Endothelial cell of umbilical vein (primary cell): ENCODE measurements at regions of chr2 and their contacts with region 1.

Region 1: DNA sequence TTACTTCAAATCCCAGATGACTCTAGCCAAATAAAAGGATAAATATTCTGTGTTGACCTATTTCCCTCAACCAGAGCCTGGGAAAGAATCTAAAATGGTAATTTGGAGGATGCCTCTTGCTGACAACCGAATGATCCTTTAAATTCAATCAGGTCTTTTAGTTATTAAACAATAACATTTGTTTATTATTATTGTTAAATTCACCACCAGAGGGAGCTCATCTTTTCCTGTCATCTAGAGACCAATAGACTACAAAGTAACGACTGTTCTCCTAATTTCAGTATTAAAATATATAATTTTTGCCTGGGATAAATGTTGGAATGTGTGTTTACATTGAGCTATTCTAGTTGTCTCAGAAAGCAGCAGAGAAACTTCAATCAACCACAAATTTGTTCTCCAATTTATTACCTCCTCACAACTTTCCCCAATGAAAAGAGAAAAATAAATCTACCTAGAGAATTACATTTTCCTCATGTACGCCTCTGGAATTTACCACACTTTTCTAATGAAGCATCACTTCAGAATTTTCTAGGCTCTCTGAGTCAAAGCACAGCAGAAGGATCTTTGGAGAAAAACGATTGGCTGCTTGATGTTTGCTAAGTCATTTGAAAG is 142.7 kb downstream of the SCG2 start:
- DNase-seq: peak; percentile 26
- H3K4me3 ChIP-seq: no peak overlapping the region
- H3K27ac ChIP-seq: no peak overlapping the region
- H3K4me1 ChIP-seq: peaks cover 6% of the 10 kb centered on the region
- H3K27me3 ChIP-seq: no peaks in the 10 kb centered on the region
- CTCF ChIP-seq: peak; percentile 12 to 17
- POLR2A ChIP-seq: no peak

Region 2: DNA sequence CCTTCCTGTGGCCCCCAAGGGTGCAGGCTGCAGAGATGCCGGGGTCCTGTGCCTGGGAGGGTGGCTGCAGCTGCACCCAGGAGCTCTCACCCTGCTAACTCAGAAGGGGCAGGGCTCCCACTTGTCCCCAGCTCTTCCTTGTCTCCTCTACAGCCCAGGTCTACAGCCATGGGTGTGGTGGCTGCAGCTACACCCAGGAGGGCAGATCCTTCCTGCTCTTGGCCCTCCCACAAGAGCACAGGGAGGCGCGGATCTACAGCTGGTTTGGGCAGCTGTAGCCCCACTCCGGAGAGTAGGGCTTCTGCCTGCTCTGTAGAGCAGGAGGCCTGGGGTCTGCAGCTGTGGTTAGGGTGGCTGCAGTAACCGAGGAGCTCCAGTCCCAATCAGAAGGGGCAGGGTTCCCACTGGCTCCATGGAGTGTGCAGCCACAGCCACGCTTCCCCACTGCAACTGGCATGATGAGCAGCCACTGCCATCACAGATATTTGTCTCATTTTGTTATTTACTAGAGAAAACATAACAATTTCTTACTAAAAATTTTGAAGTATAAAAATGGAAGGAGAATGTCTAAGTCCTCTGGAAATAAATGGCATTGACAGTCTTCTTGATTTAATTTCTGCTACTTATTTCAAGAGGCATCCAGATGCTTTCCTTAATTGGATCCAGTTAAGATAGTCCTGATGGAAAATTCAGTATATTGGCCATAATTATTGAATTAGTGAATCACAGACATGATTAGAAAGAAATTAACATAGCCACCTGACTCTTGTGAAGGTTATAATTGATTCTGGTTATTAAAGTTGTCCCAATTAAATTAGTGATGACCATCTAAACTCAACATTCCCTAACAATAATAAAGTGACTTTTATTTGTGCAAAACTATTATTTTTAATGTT is 173.8 kb before region 1 on chr2:
- CTCF ChIA-PET with region 1: no interaction called
- POLR2A ChIA-PET with region 1: no interaction called
- dilution Hi-C with region 1: no loop called
- intact Hi-C with region 1: no loop called
- DNase-seq: no peak
- H3K4me3 ChIP-seq: no peak overlapping the region
- H3K27ac ChIP-seq: no peak overlapping the region
- H3K4me1 ChIP-seq: no peaks in the 10 kb centered on the region
- H3K27me3 ChIP-seq: no peaks in the 10 kb centered on the region
- CTCF ChIP-seq: no peak
- POLR2A ChIP-seq: no peak

Region 3: DNA sequence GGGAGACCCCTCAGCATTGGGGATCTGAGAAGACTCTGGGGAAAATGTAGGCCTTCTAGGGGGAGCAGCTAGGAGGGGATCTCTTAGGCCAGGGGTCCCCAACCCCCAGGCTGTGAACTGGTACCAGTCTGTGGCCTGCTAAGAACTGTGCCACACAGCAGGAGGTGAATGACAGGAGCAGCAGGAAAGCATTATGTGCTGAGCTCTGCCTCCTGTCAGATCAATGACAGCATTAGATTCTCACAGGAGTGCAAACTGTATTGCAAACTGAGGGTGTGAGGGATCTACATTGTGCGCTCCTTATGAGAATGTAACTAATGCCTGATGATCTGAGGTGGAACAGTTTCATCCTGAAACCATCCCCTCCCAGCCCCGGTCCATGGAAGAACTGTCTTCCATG is 15.5 kb after region 1 on chr2:
- CTCF ChIA-PET with region 1: interaction called, 13 read pairs
- POLR2A ChIA-PET with region 1: no interaction called
- dilution Hi-C with region 1: no loop called
- intact Hi-C with region 1: no loop called
- DNase-seq: no peak
- H3K4me3 ChIP-seq: no peak overlapping the region
- H3K27ac ChIP-seq: no peak overlapping the region
- H3K4me1 ChIP-seq: no peaks in the 10 kb centered on the region
- H3K27me3 ChIP-seq: no peaks in the 10 kb centered on the region
- CTCF ChIP-seq: no peak
- POLR2A ChIP-seq: no peak

Region 4: GRCh38 chr2:223549215-223549614 is 89.8 kb after region 1 on chr2:
- CTCF ChIA-PET with region 1: interaction called, 5 read pairs
- POLR2A ChIA-PET with region 1: no interaction called
- dilution Hi-C with region 1: no loop called
- intact Hi-C with region 1: loop called (anchors 2 kb)
- DNase-seq: peak; percentile 88
- H3K4me3 ChIP-seq: no peak overlapping the region
- H3K27ac ChIP-seq: no peak overlapping the region
- H3K4me1 ChIP-seq: peaks cover 10% of the 10 kb centered on the region
- H3K27me3 ChIP-seq: peaks cover 0 to 22% of the 10 kb centered on the region in 2 experiments
- CTCF ChIP-seq: no peak
- POLR2A ChIP-seq: peak; percentile 47

Region 5: DNA sequence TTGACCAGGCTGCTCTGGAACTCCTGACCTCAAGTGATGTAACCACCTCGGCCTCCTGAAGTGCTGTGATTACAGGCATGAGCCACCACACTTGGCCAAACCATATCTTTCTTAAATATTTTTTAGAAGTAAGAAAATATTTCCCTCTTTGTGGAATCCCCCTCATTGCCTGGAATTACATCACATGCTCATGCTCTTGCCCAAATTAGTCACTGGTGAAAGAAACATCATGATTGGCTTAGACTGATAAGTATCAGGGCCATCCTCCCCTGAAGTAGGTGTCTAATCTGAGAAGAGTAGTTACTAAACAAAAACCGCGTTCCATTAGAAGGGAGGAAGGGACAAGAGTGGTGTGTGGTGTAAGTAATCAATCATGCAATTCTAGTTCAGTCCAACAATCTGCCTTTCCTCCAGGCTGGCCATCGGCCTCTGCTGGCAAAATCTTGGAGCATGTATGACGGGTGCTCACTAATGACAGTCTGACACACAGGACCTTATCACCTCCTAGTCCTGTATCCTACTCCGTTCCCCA is 195.0 kb after region 1 on chr2:
- CTCF ChIA-PET with region 1: interaction called, 10 read pairs
- POLR2A ChIA-PET with region 1: no interaction called
- dilution Hi-C with region 1: no loop called
- intact Hi-C with region 1: no loop called
- DNase-seq: no peak
- H3K4me3 ChIP-seq: no peak overlapping the region
- H3K27ac ChIP-seq: no peak overlapping the region
- H3K4me1 ChIP-seq: no peaks in the 10 kb centered on the region
- H3K27me3 ChIP-seq: peaks cover 0 to 3% of the 10 kb centered on the region in 2 experiments
- CTCF ChIP-seq: no peak
- POLR2A ChIP-seq: no peak

Region 6: GRCh38 chr2:223860809-223861738 is 401.6 kb after region 1 on chr2:
- CTCF ChIA-PET with region 1: interaction called, 7 read pairs
- POLR2A ChIA-PET with region 1: no interaction called
- dilution Hi-C with region 1: no loop called
- intact Hi-C with region 1: loop called (anchors 5 kb)
- DNase-seq: no peak
- H3K4me3 ChIP-seq: no peak overlapping the region
- H3K27ac ChIP-seq: no peak overlapping the region
- H3K4me1 ChIP-seq: no peaks in the 10 kb centered on the region
- H3K27me3 ChIP-seq: no peaks in the 10 kb centered on the region
- CTCF ChIP-seq: no peak
- POLR2A ChIP-seq: no peak